Adrenal gland (tissue), 19 donors: ENCODE measurements at regions of chr7 and their contacts with region 1.

Region 1: DNA sequence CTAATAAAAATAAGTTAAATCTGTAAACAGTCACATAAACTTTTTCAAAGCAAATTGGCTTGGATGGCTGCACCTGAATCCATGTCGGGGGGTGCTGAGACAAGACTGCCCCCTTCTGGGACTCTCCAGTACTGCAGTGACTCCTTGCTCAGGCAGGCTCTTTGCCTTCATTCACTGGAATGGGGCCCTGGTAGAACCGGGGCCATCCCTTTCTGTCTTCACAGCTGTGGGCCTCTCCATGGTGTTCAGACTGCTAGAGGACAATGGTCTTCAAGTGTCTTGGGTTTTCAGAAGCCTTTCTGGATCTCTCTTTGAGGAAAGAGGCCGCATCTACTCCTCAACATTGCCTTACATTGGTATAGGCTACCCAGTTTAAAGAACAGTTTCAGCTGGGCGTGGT is 16.1 kb upstream of the IMPDH1 start:
- DNase-seq: peak; percentile 66 to 88 (median 75)
- H3K4me3 ChIP-seq: no peak overlapping the region
- H3K27ac ChIP-seq: no peak overlapping the region
- H3K4me1 ChIP-seq: no peaks in the 10 kb centered on the region
- H3K27me3 ChIP-seq: no peaks in the 10 kb centered on the region
- CTCF ChIP-seq: peak; percentile 79 to 91 (median 84)
- POLR2A ChIP-seq: no peak

Region 2: GRCh38 chr7:128455551-128456254 is 29.9 kb after region 1 on chr7 and contains the start of gene HILPDA:
- intact Hi-C with region 1: loop called (anchors 2 to 5 kb)
- DNase-seq: peak; percentile 93 to 94 (median 94)
- H3K4me3 ChIP-seq: peak within 1 kb of the TSS in 3 of 4 donors; percentile 53 to 82 (median 62)
- H3K27ac ChIP-seq: peak within 1 kb of the TSS; percentile 67 to 95 (median 80)
- H3K4me1 ChIP-seq: peaks cover 14 to 30% of the 10 kb centered on the region in 2 donors
- H3K27me3 ChIP-seq: no peaks in the 10 kb centered on the region
- CTCF ChIP-seq: peak in 1 of 6 experiments; percentile 4
- POLR2A ChIP-seq: peak; percentile 62 to 84
- total RNA-seq, gene HILPDA: 3.0 to 15.5 (median 6.9) TPM